Cardiac septum (tissue), 1 donor: ENCODE measurements at regions of chr6 and their contacts with region 1.

Region 1: GRCh38 chr6:53986165-53986720 is 125.0 kb upstream of the MLIP start:
- DNase-seq: no peak

Region 2: GRCh38 chr6:54267798-54268197 is 281.6 kb after region 1 on chr6:
- intact Hi-C with region 1: loop called (anchors 5 kb)
- DNase-seq: no peak

Region 3: DNA sequence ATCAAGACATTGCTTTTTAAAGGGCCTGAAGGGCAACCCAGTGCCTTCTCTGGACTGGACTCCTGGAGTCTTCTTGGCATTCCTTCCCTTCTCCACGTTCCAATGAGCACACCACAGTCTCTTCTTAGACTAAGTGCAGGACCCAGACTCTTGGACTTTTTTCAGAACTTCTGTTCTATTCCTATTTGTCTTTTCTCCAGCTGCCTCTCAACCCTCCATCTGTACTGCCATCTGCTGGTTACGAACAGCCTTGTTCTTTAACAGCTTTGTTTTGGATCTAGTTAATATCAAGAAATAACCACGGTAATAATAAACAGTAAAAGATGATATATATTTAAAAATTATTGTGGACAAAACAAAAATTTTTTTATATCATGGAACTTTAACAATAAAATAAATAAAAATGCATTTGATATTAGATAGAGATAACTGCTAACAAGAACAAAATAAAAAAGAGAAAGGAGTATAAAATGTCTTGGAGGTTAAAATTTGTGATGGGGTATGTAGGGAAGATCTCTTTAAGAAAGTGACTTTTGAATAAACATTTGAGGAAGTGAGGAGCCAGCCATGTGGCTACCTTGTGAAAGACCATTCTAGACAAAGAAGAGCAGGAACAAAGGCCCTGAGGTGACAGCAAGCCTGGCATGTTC is 1083.0 kb after region 1 on chr6:
- intact Hi-C with region 1: loop called (anchors 10 kb)
- DNase-seq: no peak